ENCODE measurements at regions of chr2 and their contacts with region 1.

Region 1: DNA sequence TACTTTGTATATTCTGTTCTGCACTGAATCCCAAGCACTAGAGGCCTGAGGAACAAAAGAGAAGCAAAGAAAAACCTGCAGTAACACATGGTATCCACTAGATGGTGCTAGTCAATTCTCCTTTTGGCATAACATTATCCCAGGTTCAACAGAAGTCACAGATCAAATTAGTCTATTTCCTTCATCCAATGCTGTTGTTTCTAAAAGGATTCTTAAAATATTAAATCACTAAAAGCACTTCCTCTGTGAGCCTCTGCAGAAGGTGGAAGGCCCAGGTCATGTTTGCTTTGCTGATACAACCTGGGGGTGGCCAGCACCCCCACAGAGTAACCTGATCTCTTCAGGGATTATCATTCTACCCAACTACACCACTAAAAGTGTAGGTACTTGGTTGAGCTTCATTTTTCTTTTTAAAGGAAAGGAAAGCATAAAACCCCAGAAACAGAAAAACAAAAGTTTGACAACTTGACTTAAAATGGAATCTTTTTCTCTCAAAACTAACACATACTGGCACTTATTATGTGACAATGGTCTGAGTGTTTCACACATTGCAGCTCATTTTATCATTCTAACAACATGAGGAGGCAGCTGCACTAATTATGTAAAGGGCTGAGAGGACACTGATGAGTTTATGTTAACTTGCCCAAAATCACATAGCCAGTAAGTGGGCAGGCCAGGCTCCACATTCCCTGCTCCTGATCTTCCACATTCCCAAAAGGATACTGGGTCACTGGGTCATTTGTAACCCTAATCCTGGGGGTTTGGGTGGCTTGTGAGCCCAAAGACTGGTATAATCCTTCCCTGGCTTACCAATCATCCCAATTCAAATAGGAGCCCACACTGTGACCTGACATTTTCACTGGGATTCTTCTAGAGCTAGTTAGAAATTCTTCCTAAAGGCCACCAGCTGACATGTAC is 66.8 kb upstream of the DNER start:
- DNase-seq: no peak
- H3K4me3 ChIP-seq: no peak overlapping the region
- H3K27ac ChIP-seq: no peak overlapping the region
- H3K4me1 ChIP-seq: peaks cover 0 to 11% (median 8%) of the 10 kb centered on the region in 4 donors
- H3K27me3 ChIP-seq: no peaks in the 10 kb centered on the region
- CTCF ChIP-seq: peak; percentile 68 to 90 (median 80)
- EP300 ChIP-seq: no peak
- POLR2A ChIP-seq: no peak

Region 2: DNA sequence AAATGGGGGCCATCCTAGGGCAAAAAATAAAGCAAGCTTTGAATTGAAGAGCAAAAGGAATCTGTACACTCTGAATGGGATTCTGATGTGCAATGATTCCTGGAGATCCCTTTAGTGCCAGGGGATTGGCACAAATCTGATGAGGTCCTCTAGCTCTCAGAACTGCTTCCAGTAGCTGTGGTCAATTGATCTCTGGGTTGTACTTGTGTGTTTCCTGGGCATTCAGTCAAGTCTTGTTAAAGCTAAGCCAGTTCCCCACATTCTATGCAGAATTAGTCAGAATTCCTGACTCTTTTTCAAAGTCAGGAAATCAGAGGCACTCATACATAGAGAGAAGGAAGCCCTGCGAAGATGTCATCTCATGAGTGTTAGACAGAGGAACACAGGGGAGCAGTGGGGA is 228.0 kb before region 1 on chr2:
- intact Hi-C with region 1: no loop called
- DNase-seq: no peak
- H3K4me3 ChIP-seq: no peak overlapping the region
- H3K27ac ChIP-seq: no peak overlapping the region
- H3K4me1 ChIP-seq: no peaks in the 10 kb centered on the region
- H3K27me3 ChIP-seq: no peaks in the 10 kb centered on the region
- CTCF ChIP-seq: no peak
- EP300 ChIP-seq: no peak
- POLR2A ChIP-seq: no peak

Region 3: DNA sequence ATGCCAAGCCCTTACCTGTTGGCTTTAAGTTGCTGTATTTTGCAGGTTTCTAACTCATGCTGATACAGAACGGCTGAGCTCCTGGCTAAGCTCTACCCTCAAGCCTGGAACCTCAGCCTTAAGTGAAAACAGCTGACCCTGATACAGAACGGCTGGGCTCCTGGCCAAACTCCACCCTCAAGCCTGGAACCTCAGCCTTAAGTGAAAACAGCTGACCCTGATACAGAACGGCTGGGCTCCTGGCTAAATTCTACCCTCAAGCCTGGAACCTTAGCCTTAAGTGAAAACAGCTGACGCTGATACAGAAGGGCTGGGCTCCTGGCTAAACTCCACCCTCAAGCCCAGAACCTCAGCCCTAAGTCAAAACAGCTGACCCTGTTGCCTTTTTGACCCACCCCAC is 49.2 kb before region 1 on chr2:
- intact Hi-C with region 1: no loop called
- DNase-seq: no peak
- H3K4me3 ChIP-seq: no peak overlapping the region
- H3K27ac ChIP-seq: no peak overlapping the region
- H3K4me1 ChIP-seq: no peaks in the 10 kb centered on the region
- H3K27me3 ChIP-seq: peaks cover 0 to 6% (median 0%) of the 10 kb centered on the region in 4 donors
- CTCF ChIP-seq: no peak
- EP300 ChIP-seq: no peak
- POLR2A ChIP-seq: no peak

Region 4: GRCh38 chr2:229910832-229911412 is 129.8 kb after region 1 on chr2:
- intact Hi-C with region 1: loop called (anchors 10 kb)
- DNase-seq: no peak
- H3K4me3 ChIP-seq: no peak overlapping the region
- H3K27ac ChIP-seq: no peak overlapping the region
- H3K4me1 ChIP-seq: peaks cover 40 to 69% (median 64%) of the 10 kb centered on the region in 4 donors
- H3K27me3 ChIP-seq: no peaks in the 10 kb centered on the region
- CTCF ChIP-seq: peak in 2 of 3 experiments; percentile 9 to 32
- EP300 ChIP-seq: no peak
- POLR2A ChIP-seq: no peak

Measured in esophagus muscularis mucosa (tissue), 4 donors.